Caco-2 (cell line): ENCODE measurements at regions of chr17 and their contacts with region 1.

Region 1: DNA sequence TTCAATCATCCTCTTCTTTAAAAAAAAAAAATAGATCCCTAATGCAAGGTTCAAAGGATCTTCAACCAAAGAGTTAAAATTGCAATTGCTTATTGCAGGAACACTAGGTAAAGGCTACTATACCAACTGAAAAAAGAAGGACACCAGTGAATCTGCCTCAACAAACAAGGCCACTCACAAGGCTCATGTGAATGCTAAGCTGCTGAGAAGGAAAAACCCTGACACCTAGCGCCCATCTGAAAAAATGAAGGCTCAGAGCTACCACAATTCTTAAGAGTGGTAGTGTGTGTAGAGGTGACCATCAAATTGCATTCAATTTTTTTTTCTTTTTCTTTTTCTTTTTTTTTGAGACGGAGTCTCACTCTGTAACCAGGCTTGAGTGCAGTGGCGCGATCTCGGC is 201.6 kb upstream of the C17orf78 start:
- DNase-seq: peak; percentile 53 to 56
- H3K4me3 ChIP-seq: no peak overlapping the region
- H3K4me3 Mint-ChIP-seq: no peak overlapping the region
- H3K27ac Mint-ChIP-seq: no peak overlapping the region
- H3K4me1 ChIP-seq: no peaks in the 10 kb centered on the region
- H3K4me1 Mint-ChIP-seq: peaks cover 4% of the 10 kb centered on the region
- H3K27me3 ChIP-seq: no peaks in the 10 kb centered on the region
- H3K27me3 Mint-ChIP-seq: no peaks in the 10 kb centered on the region
- CTCF ChIP-seq: peak; percentile 23 to 71

Region 2: DNA sequence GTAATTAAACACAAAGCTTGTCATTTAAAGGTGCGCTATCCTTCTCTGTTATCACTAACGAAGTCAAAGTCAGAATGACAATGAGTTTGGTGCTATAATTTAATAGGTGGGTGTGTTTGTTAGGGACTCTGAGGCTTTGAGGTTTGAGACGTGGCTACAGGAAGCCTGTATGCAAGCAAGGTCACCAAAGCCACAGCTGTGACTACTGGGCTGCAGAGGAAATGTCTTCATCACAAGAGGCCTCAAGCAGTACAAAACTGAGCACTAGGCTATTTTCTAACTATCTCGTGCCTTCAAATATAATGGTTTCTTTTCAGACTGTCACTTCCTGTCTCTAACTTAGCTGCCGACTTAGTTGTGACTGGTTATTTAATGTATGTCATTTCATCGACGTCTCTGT is 84.2 kb before region 1 on chr17:
- CTCF ChIA-PET with region 1: interaction called, 7 read pairs
- POLR2A ChIA-PET with region 1: no interaction called
- intact Hi-C with region 1: loop called (anchors 5 kb)
- DNase-seq: no peak
- H3K4me3 ChIP-seq: no peak overlapping the region
- H3K4me3 Mint-ChIP-seq: no peak overlapping the region
- H3K27ac Mint-ChIP-seq: no peak overlapping the region
- H3K4me1 ChIP-seq: peaks cover 10% of the 10 kb centered on the region; the same call in 1 of the 2 replicates
- H3K4me1 Mint-ChIP-seq: no peaks in the 10 kb centered on the region
- H3K27me3 ChIP-seq: no peaks in the 10 kb centered on the region
- H3K27me3 Mint-ChIP-seq: no peaks in the 10 kb centered on the region
- CTCF ChIP-seq: no peak